ENCODE measurements at regions of chr4 and their contacts with region 1.

Region 1: DNA sequence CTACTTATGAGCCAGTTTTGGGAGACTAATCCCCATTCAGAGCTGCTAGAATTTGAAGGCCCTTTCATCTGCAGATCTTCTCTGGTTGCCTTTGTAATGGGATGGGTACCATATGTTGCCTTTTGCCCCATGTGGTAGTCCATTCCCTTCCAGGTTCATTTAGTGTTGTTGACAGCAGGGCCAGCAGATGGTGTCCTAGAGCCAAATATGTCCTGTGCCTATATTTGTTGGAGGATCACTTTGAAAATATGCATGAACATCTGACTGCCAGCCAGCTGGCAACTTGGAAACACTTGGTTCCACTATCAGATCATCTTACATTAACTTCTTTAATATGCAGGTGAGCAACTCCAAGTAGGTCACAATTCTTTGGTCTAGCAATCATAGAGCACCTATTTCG is 30.4 kb downstream of the CFAP299 start:
- DNase-seq: peak; percentile 69
- H3K4me3 Mint-ChIP-seq: no peak overlapping the region
- H3K27ac Mint-ChIP-seq: no peak overlapping the region
- H3K4me1 Mint-ChIP-seq: peaks cover 2% of the 10 kb centered on the region
- H3K27me3 Mint-ChIP-seq: peaks cover 4% of the 10 kb centered on the region

Region 2: GRCh38 chr4:80989921-80990544 is 624.1 kb after region 1 on chr4:
- CTCF ChIA-PET with region 1: interaction called, 17 read pairs
- DNase-seq: peak; percentile 20
- H3K4me3 Mint-ChIP-seq: no peak overlapping the region
- H3K27ac Mint-ChIP-seq: no peak overlapping the region
- H3K4me1 Mint-ChIP-seq: no peaks in the 10 kb centered on the region
- H3K27me3 Mint-ChIP-seq: peaks cover 4% of the 10 kb centered on the region

Region 3: DNA sequence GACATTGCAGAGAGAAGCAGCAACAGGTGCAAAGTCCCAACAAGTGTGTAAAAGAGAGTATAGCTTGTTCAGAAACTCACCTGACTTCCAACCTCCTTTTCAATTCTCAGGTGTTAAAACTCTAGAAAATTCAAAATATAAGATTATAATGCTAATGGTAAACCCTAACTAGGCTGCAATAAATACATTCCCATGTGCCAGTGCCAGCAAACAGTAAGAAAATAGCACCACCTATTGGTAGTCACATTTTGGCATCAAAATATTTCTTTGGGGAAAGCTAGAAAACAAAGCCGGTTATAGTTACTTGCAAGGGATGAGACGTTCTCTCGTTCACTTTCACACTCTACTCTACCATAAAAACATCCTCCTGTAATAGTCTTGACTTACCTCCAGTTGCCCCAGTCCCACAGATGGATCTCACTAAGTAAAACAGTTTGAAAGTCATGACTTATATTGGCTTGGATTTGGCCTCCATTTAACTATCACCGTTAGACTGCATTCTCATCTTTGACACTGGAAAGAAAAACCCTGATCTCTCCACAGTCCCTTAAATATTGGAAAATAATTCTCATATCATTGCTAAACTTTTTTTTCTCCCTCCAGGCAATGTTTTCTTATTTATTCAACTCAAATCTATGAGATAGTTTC is 674.2 kb after region 1 on chr4:
- CTCF ChIA-PET with region 1: interaction called, 10 read pairs
- DNase-seq: no peak
- H3K4me3 Mint-ChIP-seq: no peak overlapping the region
- H3K27ac Mint-ChIP-seq: no peak overlapping the region
- H3K4me1 Mint-ChIP-seq: no peaks in the 10 kb centered on the region
- H3K27me3 Mint-ChIP-seq: peaks cover 17% of the 10 kb centered on the region

Measured in activated naive CD4-positive, alpha-beta T cell treated with anti-CD3 and anti-CD28 coated beads, Interleukin-2, amount 10 ng/mL, durations not matched to agents 7 days and 5 days (primary cell).